Activated T-helper 1 cell treated with anti-CD3 and anti-CD28 coated beads, Interleukin-12 subunit alpha, Interleukin-12 subunit beta, Interleukin-2, Interleukin-4 antibody, amounts not matched to agents 30 ng/mL and 10 ng/mL and 1 ng/mL, durations not matched to agents 14 hours and 24 hours and 36 hours (primary cell): ENCODE measurements at regions of chr1 and their contacts with region 1.

Region 1: DNA sequence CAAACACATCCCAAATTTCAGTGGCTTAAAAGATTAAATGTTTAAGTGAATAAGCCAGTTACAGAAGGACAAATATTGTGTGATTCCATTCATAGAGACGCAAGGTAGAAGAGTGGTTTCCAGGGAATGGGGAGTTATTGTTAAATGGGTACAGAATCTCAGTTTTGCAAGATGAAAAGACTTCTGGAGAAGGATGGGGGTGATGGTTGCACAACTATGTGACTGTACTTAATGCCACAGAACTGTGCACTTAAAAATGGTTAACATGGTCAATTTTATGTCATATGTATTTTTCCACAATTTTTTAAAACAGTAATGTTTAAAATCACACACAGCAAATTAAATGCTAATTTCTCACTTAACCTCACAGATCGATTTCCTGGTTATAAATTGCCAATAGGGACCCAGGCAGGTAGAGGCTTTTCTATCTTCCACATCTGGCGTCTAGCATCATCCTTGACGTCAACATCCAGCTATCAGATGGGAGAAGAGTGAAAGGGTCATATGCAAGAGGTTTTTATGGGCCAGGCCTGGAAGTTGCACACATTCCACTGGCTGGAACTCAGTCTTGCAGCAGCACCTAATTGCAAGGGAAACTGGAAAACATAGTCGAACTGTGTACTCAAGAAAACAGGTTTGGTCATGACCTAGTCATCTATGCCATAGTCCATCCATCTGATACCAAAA is 6.1 kb upstream of the EEIG2 start:
- DNase-seq: no peak
- H3K4me3 Mint-ChIP-seq: no peak overlapping the region
- H3K27ac Mint-ChIP-seq: no peak overlapping the region
- H3K4me1 Mint-ChIP-seq: no peaks in the 10 kb centered on the region
- H3K27me3 Mint-ChIP-seq: peaks cover 13% of the 10 kb centered on the region

Region 2: DNA sequence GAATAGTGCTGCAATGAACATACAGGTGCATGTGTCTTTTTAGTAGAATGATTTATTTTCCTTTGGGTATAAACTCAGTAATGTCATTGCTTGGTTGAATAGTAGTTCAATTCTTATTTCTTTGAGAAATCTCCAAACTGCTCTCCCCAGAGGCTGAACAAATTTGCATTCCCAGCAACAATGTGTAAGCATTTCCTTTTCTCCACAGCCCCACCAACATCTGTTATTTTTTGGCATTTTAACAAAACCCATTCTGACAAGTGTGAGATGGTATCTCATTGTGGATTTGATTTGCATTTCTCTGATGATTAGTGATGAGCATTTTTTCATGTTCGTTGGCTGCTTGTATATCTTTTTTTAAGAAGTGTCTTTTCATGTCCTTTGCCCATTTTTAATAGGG is 15.8 kb before region 1 on chr1:
- intact Hi-C with region 1: loop called (anchors 2 kb)
- DNase-seq: no peak
- H3K4me3 Mint-ChIP-seq: no peak overlapping the region
- H3K27ac Mint-ChIP-seq: no peak overlapping the region
- H3K4me1 Mint-ChIP-seq: no peaks in the 10 kb centered on the region
- H3K27me3 Mint-ChIP-seq: peaks cover 21% of the 10 kb centered on the region

Region 3: DNA sequence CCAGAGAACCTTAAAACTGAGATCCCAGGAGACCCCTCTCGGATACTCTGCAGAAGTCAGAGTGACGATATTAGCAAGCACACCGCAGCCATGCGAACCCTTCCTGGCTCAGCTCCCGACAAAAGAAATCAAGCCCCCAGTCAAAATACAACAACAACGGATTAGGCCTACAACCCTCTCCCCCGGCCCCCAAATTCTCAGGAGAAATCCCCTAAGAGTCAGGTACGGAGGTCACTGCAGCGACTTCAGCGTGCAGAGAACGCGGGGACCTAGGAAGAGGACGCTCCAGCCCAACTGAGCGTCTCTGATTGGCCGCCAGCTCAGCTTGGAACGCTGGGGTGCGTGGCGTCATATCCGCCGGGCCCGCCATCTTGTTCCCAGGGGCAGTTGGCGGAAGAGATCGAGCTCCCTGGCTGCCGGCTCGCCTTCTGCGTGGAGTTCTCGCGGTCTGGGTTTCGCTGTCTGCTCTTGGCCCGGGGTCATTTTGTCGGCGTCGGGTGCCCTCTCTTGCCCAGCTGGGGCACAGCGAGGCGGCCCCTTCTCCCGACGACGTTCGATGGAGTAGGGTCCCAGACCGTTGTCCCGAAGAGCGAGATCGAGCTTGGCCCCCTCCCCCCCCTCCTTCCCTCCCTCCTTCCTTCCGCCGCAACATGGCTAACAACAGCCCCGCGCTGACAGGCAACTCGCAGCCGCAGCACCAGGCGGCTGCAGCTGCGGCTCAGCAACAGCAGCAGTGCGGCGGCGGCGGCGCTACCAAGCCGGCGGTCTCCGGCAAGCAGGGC is 138.4 kb after region 1 on chr1 and contains the start of gene PRPF38B:
- intact Hi-C with region 1: no loop called
- DNase-seq: peak; percentile 92
- H3K4me3 Mint-ChIP-seq: peak within 1 kb of the TSS; percentile 100
- H3K27ac Mint-ChIP-seq: peak within 1 kb of the TSS; percentile 100
- H3K4me1 Mint-ChIP-seq: peaks cover 44% of the 10 kb centered on the region
- H3K27me3 Mint-ChIP-seq: peaks cover 9% of the 10 kb centered on the region
- total RNA-seq, gene PRPF38B: 94.4 and 99.8 TPM in 2 replicates